Left ventricle myocardium inferior (tissue), 1 donor: ENCODE measurements at regions of chr10 and their contacts with region 1.

Region 1: DNA sequence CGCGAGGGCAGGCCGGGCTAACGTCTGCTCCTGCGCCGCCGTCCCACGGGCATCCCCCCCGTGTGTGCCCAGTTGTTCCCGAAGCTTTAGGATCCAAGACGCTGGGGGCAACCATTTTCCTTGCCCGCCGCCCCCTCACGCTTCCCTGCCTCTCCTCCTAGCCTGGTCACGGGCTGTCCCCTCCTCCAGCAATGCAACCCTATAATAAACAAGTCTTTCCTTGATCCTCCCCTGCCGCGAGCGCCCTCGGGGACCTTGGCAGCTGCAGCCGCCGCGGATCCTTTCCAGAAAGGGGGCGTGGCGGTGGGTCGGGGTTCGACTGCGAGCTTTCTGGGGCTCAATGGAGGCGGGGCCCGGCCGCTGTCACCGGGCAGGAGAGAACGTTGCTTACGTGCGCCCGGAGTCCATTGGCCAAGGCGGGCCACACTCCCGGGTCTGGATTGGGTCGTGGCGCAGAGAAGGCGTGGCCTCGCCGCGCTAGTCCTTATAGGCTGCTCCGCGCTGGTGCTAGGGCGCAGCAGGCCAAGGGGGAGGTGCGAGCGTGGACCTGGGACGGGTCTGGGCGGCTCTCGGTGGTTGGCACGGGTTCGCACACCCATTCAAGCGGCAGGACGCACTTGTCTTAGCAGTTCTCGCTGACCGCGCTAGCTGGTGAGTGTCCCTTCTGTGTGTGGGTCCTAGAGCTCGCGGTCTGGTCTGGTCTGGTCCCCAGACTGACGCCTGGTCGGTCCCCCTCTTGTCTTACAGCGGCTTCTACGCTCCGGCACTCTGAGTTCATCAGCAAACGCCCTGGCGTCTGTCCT is at the start of gene DDIT4:
- DNase-seq: peak; percentile 100
- H3K4me3 ChIP-seq: peak within 1 kb of the TSS; percentile 84
- H3K27ac ChIP-seq: peak within 1 kb of the TSS; percentile 100
- H3K4me1 ChIP-seq: peaks cover 64% of the 10 kb centered on the region
- H3K27me3 ChIP-seq: no peaks in the 10 kb centered on the region
- CTCF ChIP-seq: no peak
- total RNA-seq, gene DDIT4: 66.3 TPM

Region 2: GRCh38 chr10:72248468-72249151 is 25.0 kb before region 1 on chr10:
- intact Hi-C with region 1: loop called (anchors 2 kb)
- DNase-seq: peak; percentile 88
- H3K4me3 ChIP-seq: peak overlapping the region; percentile 50
- H3K27ac ChIP-seq: peak overlapping the region; percentile 97
- H3K4me1 ChIP-seq: peaks cover 99% of the 10 kb centered on the region
- H3K27me3 ChIP-seq: no peaks in the 10 kb centered on the region
- CTCF ChIP-seq: no peak

Region 3: GRCh38 chr10:72319416-72320254 is 46.0 kb after region 1 on chr10:
- intact Hi-C with region 1: loop called (anchors 10 kb)
- DNase-seq: peak; percentile 95
- H3K4me3 ChIP-seq: peak overlapping the region; percentile 65
- H3K27ac ChIP-seq: peak overlapping the region; percentile 91
- H3K4me1 ChIP-seq: peaks cover 72% of the 10 kb centered on the region
- H3K27me3 ChIP-seq: no peaks in the 10 kb centered on the region
- CTCF ChIP-seq: no peak